Tibial artery (tissue), 4 donors: ENCODE measurements at regions of chrX and their contacts with region 1.

Region 1: DNA sequence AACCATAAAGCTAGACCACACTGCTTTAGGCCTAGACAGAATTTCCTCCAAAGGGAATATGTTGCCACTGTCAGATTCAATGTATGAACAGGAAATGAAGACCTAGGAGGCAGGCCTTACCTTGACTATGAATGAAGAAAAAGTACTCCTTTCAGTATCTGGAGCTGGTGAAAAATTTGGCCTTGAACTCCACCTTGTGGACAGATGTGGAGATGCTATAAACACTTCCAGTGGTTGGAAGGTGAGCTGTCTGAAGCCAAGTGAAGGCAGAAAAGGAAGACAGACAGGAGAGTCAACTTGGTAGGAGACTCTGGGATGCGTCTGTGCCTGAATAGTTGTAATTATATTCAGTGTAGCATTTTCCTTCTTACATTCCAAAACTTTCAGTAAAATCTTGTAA is 17.2 kb downstream of the SPIN3 start:
- DNase-seq: no peak
- H3K4me3 ChIP-seq: no peak overlapping the region
- H3K27ac ChIP-seq: no peak overlapping the region
- H3K4me1 ChIP-seq: no peaks in the 10 kb centered on the region
- H3K27me3 ChIP-seq: no peaks in the 10 kb centered on the region
- CTCF ChIP-seq: peak; percentile 41 to 48

Region 2: DNA sequence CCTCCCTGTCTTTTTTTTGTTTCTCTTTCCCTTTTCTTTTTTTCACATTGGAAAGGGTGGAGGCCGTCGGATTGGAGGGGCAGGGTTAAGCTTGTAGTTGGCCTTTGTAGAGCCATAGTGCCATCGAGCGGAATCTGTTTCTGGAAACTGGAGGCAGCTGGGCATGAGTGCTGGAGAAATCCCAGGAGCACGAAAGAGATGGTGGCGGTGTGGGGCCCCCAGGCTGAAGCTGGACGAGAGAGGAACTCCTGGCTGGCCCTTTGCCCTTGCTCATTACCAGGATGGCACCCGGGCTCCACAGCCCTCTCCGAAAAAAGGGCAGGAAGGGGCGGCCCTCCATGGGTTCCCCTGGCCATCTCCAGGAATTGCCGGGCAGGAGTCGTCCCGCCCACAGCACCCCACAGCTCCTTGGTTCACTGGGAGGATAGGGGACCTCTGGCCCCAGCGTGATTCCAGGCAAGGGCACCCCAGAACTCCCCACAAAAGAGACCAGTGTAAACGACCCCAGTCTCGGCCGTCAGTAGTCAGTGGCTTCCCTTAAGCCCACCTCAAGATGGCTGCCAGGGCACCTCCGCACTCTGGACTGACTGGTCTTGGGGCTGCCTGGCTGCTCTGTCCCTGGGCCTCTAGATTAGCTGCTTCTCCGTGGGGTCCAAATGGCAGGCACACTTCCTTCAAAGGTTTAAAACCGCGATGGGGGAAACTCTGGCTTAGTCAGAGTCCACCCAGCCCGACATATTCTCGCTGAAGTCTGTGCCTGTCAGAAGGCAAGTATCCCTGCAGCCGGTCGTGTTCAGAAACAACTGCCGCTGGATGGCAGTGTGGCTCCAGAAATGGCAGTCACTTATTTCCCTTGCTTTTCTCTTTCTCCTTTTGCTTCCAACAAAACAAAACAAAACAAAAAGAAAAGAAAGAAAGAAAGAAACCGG is 175.0 kb before region 1 on chrX:
- intact Hi-C with region 1: loop called (anchors 5 kb)
- DNase-seq: peak in 1 of 2 donors; percentile 29
- H3K4me3 ChIP-seq: no peak overlapping the region
- H3K27ac ChIP-seq: no peak overlapping the region
- H3K4me1 ChIP-seq: peaks cover 0 to 28% (median 2%) of the 10 kb centered on the region in 4 donors
- H3K27me3 ChIP-seq: no peaks in the 10 kb centered on the region
- CTCF ChIP-seq: peak; percentile 12 to 16

Region 3: GRCh38 chrX:56928546-56928945 is 49.6 kb before region 1 on chrX:
- intact Hi-C with region 1: no loop called
- DNase-seq: no peak
- H3K4me3 ChIP-seq: no peak overlapping the region
- H3K27ac ChIP-seq: no peak overlapping the region
- H3K4me1 ChIP-seq: no peaks in the 10 kb centered on the region
- H3K27me3 ChIP-seq: no peaks in the 10 kb centered on the region
- CTCF ChIP-seq: no peak